ENCODE measurements at regions of chr1 and their contacts with region 1.

Region 1: GRCh38 chr1:110034451-110035235 is at the start of gene STRIP1:
- DNase-seq: peak; percentile 96
- H3K4me3 Mint-ChIP-seq: peak within 1 kb of the TSS; percentile 91
- H3K27ac Mint-ChIP-seq: peak within 1 kb of the TSS; percentile 79
- H3K4me1 Mint-ChIP-seq: peaks cover 51% of the 10 kb centered on the region
- H3K27me3 Mint-ChIP-seq: no peaks in the 10 kb centered on the region
- total RNA-seq, gene STRIP1: 20.7 to 22.8 TPM

Region 2: DNA sequence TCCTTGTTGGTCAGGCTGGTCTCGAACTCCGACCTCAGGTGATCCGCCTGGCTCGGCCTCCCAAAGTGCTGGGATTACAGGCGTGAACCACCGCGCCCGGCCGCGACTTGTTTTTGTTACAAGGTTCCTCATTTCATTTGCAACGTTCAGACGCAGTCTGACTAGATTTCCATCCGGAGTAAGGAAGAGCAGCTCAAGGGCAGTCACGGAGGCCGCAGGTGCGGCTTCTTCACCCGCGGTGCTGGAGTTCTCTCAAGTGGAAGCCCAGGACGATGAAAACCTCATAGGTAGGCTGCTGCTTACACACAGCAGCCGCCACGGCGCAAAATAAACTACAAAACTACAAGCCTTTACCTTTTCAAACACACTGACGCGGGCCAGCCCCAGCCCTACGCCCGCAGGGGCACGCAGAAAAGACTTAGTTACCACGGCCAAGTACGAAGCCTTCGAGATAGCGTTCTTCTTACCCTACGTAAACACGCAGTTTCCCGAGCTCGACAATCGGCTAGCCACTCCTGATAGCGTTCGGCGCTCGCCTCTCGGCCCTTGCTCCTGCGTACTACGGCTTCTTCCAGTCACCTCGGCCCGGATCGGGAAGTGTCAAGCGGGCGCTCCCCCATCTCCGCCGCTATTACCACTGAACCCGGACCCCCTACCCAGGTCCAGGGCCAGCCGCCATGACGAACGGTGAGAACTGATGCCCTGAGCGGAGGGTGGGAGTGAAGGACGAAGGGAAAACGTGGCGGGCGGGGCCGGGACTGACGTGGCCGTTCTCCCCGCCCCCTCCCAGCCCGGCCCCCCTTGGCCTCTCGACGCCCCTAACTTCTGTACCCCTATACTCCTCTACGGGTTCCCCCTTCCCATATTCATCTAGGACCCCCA is 944.2 kb before region 1 on chr1 and contains the start of gene TMEM167B:
- CTCF ChIA-PET with region 1: no interaction called
- intact Hi-C with region 1: loop called (anchors 5 kb)
- DNase-seq: peak; percentile 95
- H3K4me3 Mint-ChIP-seq: peak within 1 kb of the TSS; percentile 82
- H3K27ac Mint-ChIP-seq: peak within 1 kb of the TSS; percentile 87
- H3K4me1 Mint-ChIP-seq: peaks cover 29% of the 10 kb centered on the region
- H3K27me3 Mint-ChIP-seq: no peaks in the 10 kb centered on the region
- total RNA-seq, gene TMEM167B: 35.0 to 37.6 TPM

Region 3: DNA sequence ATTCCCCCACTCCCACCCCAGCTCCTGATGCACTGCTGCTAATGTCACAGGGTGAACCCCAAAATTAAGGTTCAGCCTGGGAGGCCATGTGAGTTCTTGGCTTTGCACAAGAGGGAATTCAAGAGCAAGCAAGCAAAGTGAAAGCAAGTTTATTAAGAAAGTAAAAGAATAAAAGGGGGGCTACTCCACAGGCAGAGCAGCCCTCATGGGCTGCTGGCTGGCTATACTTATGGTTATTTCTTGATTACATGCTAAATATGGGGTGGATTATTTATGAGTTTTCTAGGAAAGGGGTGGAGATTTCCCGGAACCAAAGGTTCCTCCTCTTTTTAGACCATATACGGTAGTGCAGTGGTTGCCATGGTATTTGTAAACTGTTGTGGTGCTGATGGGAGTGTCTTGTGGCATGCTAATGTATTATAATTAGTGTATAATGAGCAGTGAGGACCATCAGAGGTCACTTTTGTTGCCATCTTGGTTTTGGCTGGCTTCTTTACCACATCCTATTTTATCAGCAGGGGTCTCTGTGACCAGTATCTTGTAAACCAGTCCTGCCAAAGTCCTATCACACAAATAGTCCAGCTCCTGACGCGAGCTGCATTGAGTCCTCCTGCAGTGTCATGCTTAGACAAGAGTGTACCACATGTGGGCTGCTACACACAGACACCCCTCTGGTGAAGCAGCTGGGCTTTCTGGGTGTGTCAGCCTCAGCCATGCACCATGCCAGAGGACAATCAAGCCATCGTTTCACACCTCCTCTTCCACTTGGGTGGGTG is 170.4 kb before region 1 on chr1:
- CTCF ChIA-PET with region 1: no interaction called
- intact Hi-C with region 1: no loop called
- DNase-seq: no peak
- H3K4me3 Mint-ChIP-seq: no peak overlapping the region
- H3K27ac Mint-ChIP-seq: no peak overlapping the region
- H3K4me1 Mint-ChIP-seq: peaks cover 3% of the 10 kb centered on the region
- H3K27me3 Mint-ChIP-seq: no peaks in the 10 kb centered on the region

Region 4: GRCh38 chr1:110003747-110004630 is 30.7 kb before region 1 on chr1:
- CTCF ChIA-PET with region 1: interaction called, 5 read pairs
- intact Hi-C with region 1: loop called (anchors 1 kb)
- DNase-seq: peak; percentile 80
- H3K4me3 Mint-ChIP-seq: peak overlapping the region; percentile 23
- H3K27ac Mint-ChIP-seq: peak overlapping the region; percentile 83
- H3K4me1 Mint-ChIP-seq: peaks cover 21% of the 10 kb centered on the region
- H3K27me3 Mint-ChIP-seq: no peaks in the 10 kb centered on the region

Region 5: DNA sequence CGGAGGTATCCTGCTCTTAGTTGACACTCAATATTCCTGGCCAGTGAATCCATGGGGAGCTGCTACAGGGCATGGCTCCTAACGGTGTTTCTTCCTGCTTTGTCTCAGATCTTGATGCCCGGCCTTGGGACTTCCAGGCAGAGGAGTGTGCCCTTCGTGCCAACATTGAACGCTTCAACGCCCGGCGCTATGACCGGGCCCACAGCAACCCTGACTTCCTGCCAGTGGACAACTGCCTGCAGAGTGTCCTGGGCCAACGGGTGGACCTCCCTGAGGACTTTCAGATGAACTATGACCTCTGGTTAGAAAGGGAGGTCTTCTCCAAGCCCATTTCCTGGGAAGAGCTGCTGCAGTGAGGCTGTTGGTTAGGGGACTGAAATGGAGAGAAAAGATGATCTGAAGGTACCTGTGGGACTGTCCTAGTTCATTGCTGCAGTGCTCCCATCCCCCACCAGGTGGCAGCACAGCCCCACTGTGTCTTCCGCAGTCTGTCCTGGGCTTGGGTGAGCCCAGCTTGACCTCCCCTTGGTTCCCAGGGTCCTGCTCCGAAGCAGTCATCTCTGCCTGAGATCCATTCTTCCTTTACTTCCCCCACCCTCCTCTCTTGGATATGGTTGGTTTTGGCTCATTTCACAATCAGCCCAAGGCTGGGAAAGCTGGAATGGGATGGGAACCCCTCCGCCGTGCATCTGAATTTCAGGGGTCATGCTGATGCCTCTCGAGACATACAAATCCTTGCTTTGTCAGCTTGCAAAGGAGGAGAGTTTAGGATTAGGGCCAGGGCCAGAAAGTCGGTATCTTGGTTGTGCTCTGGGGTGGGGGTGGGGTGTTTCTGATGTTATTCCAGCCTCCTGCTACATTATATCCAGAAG is 19.1 kb after region 1 on chr1:
- CTCF ChIA-PET with region 1: interaction called, 33 read pairs
- intact Hi-C with region 1: no loop called
- DNase-seq: peak; percentile 81
- H3K4me3 Mint-ChIP-seq: no peak overlapping the region
- H3K27ac Mint-ChIP-seq: no peak overlapping the region
- H3K4me1 Mint-ChIP-seq: no peaks in the 10 kb centered on the region
- H3K27me3 Mint-ChIP-seq: no peaks in the 10 kb centered on the region

Region 6: DNA sequence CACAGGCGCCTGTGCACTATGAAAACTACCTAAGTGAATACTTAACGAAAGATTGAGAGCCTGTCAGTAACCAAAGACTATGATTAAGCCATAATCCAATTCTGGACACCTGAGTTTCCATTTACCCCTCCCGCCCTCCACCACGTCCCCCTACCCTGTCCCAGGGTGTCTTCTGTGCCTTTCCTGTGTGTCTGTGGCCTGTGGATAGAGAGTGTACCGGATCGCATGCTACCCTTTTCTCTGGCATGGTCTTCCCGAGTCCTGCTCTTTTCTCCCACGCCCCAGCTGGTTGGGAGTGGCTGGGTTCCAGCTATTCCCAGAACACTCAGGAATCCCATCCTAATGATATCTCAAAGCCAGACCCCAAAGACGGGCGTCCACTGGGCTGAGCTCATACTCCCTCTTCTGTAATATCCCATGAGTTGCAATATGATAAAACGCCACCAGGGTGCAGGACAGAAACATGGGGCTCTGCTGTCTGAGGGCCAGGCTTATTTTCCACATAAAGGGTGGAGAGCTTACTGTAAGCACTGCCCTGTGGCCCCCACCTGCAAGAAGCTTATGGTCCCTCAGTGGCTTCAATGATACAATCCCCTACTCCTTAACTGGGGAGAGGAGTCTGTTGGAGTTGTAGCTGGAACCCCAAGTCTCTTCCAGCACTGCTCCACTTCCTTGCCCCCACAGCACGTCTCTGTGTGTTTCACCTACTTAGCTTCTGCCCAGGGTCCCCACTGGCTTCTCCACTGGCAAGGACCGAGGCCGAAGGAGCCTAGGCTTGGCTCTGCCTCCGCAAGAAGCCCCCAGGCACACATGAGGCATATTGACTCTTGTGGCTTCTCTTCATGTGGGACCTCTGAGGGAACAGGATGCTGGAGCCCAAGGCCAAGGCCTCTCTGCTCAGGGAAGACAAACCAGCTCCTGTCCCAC is 53.4 kb after region 1 on chr1:
- CTCF ChIA-PET with region 1: interaction called, 3 read pairs
- intact Hi-C with region 1: loop called (anchors 2 kb)
- DNase-seq: peak; percentile 64
- H3K4me3 Mint-ChIP-seq: no peak overlapping the region
- H3K27ac Mint-ChIP-seq: no peak overlapping the region
- H3K4me1 Mint-ChIP-seq: peaks cover 11% of the 10 kb centered on the region
- H3K27me3 Mint-ChIP-seq: peaks cover 44% of the 10 kb centered on the region

Region 7: GRCh38 chr1:110118636-110119615 is 84.3 kb after region 1 on chr1:
- CTCF ChIA-PET with region 1: interaction called, 10 read pairs
- intact Hi-C with region 1: no loop called
- DNase-seq: peak; percentile 50
- H3K4me3 Mint-ChIP-seq: no peak overlapping the region
- H3K27ac Mint-ChIP-seq: no peak overlapping the region
- H3K4me1 Mint-ChIP-seq: peaks cover 4% of the 10 kb centered on the region
- H3K27me3 Mint-ChIP-seq: peaks cover 18% of the 10 kb centered on the region